Activated T-helper 1 cell treated with anti-CD3 and anti-CD28 coated beads, Interleukin-12 subunit alpha, Interleukin-12 subunit beta, Interleukin-2, Interleukin-4 antibody, amounts not matched to agents 30 ng/mL and 10 ng/mL and 1 ng/mL, durations not matched to agents 14 hours and 24 hours and 36 hours (primary cell): ENCODE measurements at regions of chr1 and their contacts with region 1.

Region 1: GRCh38 chr1:115706587-115707425 is 61.7 kb downstream of the CASQ2 start:
- DNase-seq: no peak
- H3K4me3 Mint-ChIP-seq: no peak overlapping the region
- H3K27ac Mint-ChIP-seq: no peak overlapping the region
- H3K4me1 Mint-ChIP-seq: no peaks in the 10 kb centered on the region
- H3K27me3 Mint-ChIP-seq: peaks cover 28% of the 10 kb centered on the region

Region 2: DNA sequence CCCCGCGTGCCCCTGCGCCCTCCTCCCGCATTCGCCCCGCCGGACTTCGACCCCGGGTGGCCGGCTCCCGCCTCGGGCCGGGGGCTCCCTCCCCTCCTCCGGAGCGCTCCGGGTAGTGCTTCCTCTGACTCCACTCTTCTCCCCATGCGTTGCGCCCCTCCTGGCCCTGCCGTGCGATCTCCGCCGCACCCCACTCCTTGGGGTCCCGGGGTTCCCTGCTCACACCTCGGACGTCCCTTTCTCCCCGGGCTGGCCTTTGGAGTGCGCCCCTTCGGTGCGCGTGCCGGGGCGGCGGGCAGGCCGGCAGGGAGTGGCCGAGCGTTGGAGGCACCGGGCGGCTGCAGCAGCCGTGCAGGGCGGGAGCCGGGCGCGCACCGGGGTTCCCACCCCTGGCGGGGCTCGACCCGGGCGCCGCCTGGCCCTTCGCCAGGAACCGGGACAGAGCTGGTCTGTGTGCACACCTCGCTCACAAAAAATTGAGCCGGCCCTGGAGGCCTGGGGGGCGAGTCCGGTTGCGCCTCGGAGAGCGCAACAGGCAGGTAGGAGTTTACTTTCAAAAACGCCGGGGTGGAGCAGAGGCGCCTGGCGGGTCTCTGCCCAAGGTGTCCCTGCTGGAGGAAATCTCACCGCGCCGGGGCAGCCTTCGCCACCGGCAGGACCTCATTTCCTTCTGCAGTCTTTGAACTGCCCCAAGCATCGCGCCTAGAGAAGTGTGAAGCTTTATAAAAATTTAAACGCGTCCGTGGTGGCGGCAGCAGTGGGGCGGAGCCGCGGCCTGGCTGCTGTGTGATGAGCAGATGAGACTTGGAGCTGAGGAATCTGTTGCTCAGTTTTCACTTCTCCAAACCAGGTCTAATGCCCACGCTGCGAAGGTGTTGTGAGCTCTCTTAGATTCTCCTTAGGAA is 64.4 kb before region 1 on chr1:
- intact Hi-C with region 1: loop called (anchors 2 kb)
- DNase-seq: peak; percentile 27
- H3K4me3 Mint-ChIP-seq: peak overlapping the region; percentile 87
- H3K27ac Mint-ChIP-seq: peak overlapping the region; percentile 48
- H3K4me1 Mint-ChIP-seq: peaks cover 16% of the 10 kb centered on the region
- H3K27me3 Mint-ChIP-seq: peaks cover 23% of the 10 kb centered on the region

Region 3: DNA sequence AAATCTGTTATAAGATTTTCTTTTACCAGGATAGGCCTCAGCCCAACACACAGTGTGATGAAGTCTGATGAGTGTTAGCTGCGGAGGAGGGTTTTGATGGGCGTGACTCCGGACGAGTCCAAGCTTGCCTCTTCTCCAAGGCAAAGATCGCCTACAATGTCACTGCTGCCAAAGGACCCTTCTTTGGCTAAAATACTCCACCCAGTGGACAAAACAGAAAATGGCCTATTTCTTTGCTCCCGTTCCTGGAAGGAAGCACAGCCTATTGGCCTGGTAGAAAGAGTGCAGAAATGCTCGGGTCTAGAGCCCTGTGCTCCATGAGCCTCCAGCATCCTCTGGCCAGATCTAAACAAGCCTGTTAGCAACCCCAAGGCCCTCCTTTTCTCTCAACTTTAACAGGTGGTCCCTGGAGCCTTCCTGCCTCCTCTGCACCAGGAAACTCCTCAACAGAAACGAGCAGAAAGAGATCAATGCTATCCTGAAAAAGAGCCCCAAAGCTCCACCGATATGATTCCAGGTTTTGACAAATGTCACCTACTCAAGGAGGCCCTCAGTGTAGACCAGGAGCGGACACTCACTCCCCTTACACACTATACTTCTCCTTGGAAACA is 65.1 kb after region 1 on chr1:
- intact Hi-C with region 1: loop called (anchors 5 kb)
- DNase-seq: no peak
- H3K4me3 Mint-ChIP-seq: no peak overlapping the region
- H3K27ac Mint-ChIP-seq: no peak overlapping the region
- H3K4me1 Mint-ChIP-seq: no peaks in the 10 kb centered on the region
- H3K27me3 Mint-ChIP-seq: peaks cover 8% of the 10 kb centered on the region